Dendritic cell treated with granulocyte-macrophage colony-stimulating factor and Interleukin-4, amounts not matched to agents 40 ng/mL and 50 ng/mL, for 4 days (primary cell): ENCODE measurements at regions of chr6 and their contacts with region 1.

Region 1: DNA sequence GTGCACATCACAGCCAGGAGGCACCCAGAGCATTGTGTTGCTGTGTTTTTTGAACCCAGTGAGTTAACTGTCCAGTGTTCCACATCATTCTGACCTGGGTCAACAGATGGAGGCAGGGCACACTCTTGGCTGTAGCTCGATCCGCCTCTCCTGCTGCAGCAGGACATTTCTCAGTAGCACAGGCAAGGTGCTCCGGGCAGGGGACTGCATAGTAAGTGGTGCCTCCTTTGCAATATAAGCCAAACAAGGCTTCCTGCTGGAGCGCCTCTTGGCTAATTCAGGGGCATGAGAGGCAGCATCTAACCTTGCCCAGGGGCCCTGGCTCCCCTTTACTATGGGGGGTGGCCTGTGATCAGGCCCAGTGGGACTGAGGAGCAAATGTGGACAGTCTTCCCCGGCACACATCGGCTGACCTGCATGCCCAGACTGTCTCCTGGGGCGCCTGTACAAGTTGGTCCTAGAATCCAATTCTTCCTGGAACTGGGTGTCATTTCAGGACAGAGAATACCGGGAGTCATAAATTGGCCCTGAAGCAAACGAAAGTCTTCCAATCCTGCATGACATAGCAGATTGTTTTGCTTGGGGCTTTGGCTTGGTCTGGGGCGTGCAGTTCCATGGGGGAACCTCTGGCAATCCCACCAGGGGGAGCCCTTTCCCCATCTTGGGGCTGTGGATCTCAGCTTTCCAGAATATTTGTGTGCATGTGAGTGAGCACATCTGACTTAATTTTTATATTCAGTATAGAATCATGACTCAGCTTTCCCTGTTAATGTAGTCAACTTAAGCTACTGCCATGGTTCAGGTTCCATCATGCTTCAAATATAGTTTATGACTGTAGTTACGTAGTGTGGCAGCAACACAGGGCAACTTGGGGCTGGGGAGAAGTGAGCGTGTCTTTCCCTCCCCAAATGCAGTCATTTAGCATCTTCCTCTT is 56.0 kb upstream of the DDR1 start:
- H3K4me3 Mint-ChIP-seq: no peak overlapping the region
- H3K27ac Mint-ChIP-seq: peak overlapping the region; percentile 87
- H3K4me1 Mint-ChIP-seq: peaks cover 70% of the 10 kb centered on the region
- H3K27me3 Mint-ChIP-seq: no peaks in the 10 kb centered on the region

Region 2: DNA sequence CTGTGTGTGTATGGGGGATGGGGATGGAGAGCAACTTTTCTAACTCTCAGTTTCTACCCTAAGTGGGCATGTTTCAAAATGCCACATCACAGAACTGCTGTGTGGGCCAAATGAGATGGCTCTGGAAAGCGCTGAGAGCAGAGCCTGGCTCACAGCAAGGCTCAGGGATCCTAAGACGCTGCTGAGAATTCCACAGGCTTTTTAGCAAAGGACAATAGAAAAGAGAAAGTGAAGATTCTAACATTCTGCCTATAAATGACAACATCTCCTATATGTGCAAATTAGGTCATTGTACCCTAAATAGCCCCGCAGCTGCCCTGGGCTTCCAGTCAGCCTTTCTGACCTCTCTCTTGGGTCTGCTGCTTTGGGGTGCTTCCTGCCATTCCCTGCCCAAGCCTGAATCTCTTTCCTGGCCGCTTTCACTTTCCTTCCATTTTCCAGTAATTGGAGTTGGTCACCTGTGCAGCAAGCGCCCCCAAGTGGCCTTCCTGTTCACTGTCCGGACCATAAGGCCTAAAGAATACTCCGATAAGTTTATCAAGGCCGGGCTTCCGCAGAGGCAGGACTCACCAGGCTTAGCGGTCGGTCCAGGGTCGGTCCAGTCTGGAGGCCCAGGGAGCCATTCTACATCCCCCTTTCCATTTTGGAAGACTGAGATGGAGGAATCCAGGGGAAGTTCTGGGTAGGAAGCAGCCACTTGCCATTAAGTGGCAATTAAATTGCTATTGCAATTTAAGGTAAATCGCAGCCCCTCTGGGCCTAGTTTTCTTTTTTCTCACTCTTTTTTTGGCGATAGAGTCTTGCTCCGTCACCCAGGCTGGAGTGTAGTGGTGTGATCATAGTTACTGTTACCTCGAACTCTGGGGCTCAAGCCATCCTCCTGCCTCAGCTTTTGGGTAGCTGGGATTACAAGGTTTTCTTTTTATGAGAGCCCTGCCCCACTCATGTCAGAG is 49.4 kb after region 1 on chr6:
- intact Hi-C with region 1: loop called (anchors 1 kb)
- H3K4me3 Mint-ChIP-seq: peak overlapping the region; percentile 65
- H3K27ac Mint-ChIP-seq: peak overlapping the region; percentile 21
- H3K4me1 Mint-ChIP-seq: peaks cover 8% of the 10 kb centered on the region
- H3K27me3 Mint-ChIP-seq: peaks cover 23% of the 10 kb centered on the region

Region 3: GRCh38 chr6:30974488-30975252 is 146.4 kb after region 1 on chr6:
- intact Hi-C with region 1: no loop called
- H3K4me3 Mint-ChIP-seq: no peak overlapping the region
- H3K27ac Mint-ChIP-seq: no peak overlapping the region
- H3K4me1 Mint-ChIP-seq: peaks cover 10% of the 10 kb centered on the region
- H3K27me3 Mint-ChIP-seq: peaks cover 47% of the 10 kb centered on the region

Region 4: DNA sequence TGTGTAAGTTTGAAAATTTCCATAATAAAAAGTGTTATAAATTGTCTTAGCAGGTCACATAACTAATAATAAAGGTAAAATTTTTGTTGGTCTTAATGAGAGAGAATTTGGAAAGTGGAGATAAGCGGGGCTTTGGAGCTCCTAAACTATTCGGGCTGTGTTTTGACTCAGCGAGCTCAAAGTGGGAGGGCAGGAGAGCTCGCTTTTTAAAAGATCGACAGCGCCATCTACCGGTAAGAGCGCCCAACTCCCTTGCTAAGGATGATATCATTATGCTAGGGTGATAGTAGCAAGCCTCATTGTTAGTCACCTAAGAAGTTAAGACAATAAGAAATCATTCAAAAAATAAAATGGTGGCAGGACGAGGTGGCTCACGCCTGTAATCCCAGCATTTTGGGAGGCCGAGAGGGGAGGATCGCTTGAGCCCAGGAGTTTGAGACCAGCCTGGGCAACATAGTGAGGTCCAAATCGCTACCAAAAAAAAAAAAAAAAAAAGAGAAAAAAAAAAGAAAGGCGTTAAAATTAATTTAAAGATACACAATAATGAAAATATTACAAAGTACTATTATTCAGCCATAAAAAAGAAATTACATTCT is 259.3 kb after region 1 on chr6:
- intact Hi-C with region 1: loop called (anchors 5 kb)
- H3K4me3 Mint-ChIP-seq: no peak overlapping the region
- H3K27ac Mint-ChIP-seq: no peak overlapping the region
- H3K4me1 Mint-ChIP-seq: peaks cover 5% of the 10 kb centered on the region
- H3K27me3 Mint-ChIP-seq: peaks cover 13% of the 10 kb centered on the region